Left ventricle myocardium superior (tissue), 1 donor: ENCODE measurements at regions of chr4 and their contacts with region 1.

Region 1: GRCh38 chr4:25767877-25768725 is 94.7 kb downstream of the SEL1L3 start:
- DNase-seq: no peak
- ATAC-seq: peak; percentile 87

Region 2: DNA sequence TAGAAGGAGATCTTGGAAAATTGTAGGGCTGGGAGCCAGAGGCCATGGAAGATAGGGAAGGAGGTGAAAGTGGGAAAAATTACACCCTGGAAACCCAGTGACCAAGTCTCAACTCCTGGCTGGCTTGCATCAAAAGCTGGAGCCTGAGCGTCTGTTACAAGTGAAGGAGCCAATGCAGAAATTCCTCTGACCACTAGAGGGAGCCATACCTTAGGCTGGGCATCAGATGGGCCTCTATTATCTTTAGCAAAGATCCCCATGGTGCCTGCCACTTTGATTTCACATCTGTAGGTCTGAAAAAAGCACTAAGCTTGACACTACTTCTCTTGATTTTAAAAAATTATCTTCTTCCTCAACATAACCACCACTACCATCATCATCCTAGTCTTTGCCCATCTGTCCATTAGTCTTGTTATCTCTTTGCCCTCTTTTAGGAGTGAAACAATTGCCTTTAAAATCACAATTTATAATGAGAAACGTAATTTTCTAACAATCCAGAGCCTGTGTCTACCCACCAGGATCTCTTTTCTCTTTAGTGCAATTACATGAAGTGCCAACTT is 328.1 kb before region 1 on chr4:
- intact Hi-C with region 1: loop called (anchors 5 kb)
- DNase-seq: no peak
- ATAC-seq: peak; percentile 78